IMR-90 (cell line): ENCODE measurements at regions of chr22 and their contacts with region 1.

Region 1: GRCh38 chr22:37887610-37888378 is 18.3 kb upstream of the MICALL1 start:
- DNase-seq: peak; percentile 65
- ATAC-seq: peak; percentile 87
- H3K4me3 ChIP-seq: no peak overlapping the region
- H3K27ac ChIP-seq: peak overlapping the region; percentile 73
- H3K4me1 ChIP-seq: peaks cover 5% of the 10 kb centered on the region
- H3K27me3 ChIP-seq: no peaks in the 10 kb centered on the region
- CTCF ChIP-seq: peak; percentile 69
- POLR2A ChIP-seq: no peak; the same call in 1 of the 2 replicates
- RAD21 ChIP-seq: peak; percentile 75

Region 2: GRCh38 chr22:37933711-37934376 is 46.0 kb after region 1 on chr22:
- CTCF ChIA-PET with region 1: interaction called, 7 read pairs
- POLR2A ChIA-PET with region 1: no interaction called
- dilution Hi-C with region 1: no loop called
- in situ Hi-C with region 1: no loop called
- intact Hi-C with region 1: loop called (anchors 1 kb)
- DNase-seq: peak; percentile 86
- ATAC-seq: peak; percentile 99
- H3K4me3 ChIP-seq: no peak overlapping the region
- H3K27ac ChIP-seq: peak overlapping the region; percentile 48
- H3K4me1 ChIP-seq: peaks cover 16% of the 10 kb centered on the region
- H3K27me3 ChIP-seq: no peaks in the 10 kb centered on the region
- CTCF ChIP-seq: peak; percentile 99
- POLR2A ChIP-seq: no peak
- RAD21 ChIP-seq: peak; percentile 69

Region 3: GRCh38 chr22:37953437-37954179 is 65.8 kb after region 1 on chr22 and contains the starts of genes C22orf23 and POLR2F:
- CTCF ChIA-PET with region 1: no interaction called
- POLR2A ChIA-PET with region 1: no interaction called
- dilution Hi-C with region 1: no loop called
- in situ Hi-C with region 1: no loop called
- intact Hi-C with region 1: no loop called
- DNase-seq: peak; percentile 92
- ATAC-seq: peak; percentile 88
- H3K4me3 ChIP-seq: peak within 1 kb of the TSS; percentile 80
- H3K27ac ChIP-seq: peak within 1 kb of the TSS; percentile 89
- H3K4me1 ChIP-seq: peaks cover 5% of the 10 kb centered on the region
- H3K27me3 ChIP-seq: no peaks in the 10 kb centered on the region
- CTCF ChIP-seq: no peak
- POLR2A ChIP-seq: peak; percentile 72
- RAD21 ChIP-seq: no peak
- total RNA-seq, gene C22orf23: 0.28 and 0.54 TPM in 2 replicates
- total RNA-seq, gene POLR2F: 26.0 and 68.6 TPM in 2 replicates

Region 4: DNA sequence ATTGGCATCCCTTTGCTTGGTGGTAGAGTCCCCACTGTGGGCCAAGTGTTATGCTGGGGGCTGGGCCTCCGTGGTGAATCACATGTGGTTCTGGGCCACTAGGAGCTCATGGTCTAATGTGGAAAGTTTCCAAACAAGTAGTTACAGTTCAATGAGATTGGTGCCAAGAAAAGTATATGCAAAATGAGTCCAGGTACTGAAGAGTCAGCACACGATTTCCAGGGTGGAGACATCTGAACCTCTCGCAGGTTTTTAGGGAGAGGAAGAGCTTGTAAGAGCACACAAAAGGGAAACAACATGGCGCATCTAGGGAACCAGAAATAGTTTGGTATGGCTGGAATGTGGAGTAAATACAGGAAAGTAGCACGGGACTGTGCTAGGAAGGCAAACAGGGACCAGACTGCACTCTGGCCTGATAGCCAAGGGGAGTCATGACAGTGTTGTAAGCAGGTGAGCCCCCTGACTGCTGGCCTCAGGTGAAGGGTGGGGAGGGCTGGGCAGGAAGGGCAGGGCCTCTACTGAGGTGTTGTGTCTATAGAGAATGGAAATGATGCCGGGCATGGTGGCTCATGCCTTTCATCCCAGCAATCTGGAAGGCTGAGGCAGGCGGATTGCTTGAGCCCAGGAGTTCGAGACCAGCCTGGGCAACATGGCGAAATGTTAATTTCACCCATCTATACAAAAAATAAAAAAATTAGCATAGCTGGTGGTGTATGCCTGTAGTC is 78.3 kb after region 1 on chr22:
- CTCF ChIA-PET with region 1: no interaction called
- POLR2A ChIA-PET with region 1: no interaction called
- dilution Hi-C with region 1: no loop called
- in situ Hi-C with region 1: no loop called
- intact Hi-C with region 1: loop called (anchors 1 kb)
- DNase-seq: peak; percentile 11
- ATAC-seq: peak; percentile 49
- H3K4me3 ChIP-seq: no peak overlapping the region
- H3K27ac ChIP-seq: no peak overlapping the region
- H3K4me1 ChIP-seq: peaks cover 7% of the 10 kb centered on the region
- H3K27me3 ChIP-seq: no peaks in the 10 kb centered on the region
- CTCF ChIP-seq: no peak
- POLR2A ChIP-seq: no peak
- RAD21 ChIP-seq: no peak